Activated naive CD4-positive, alpha-beta T cell treated with anti-CD3 and anti-CD28 coated beads for 36 hours (primary cell): ENCODE measurements at regions of chr6 and their contacts with region 1.

Region 1: GRCh38 chr6:88855541-88856147 is 107.8 kb downstream of the RNGTT start:
- DNase-seq: no peak
- H3K4me3 Mint-ChIP-seq: no peak overlapping the region
- H3K27ac Mint-ChIP-seq: no peak overlapping the region
- H3K4me1 Mint-ChIP-seq: no peaks in the 10 kb centered on the region
- H3K27me3 Mint-ChIP-seq: no peaks in the 10 kb centered on the region

Region 2: DNA sequence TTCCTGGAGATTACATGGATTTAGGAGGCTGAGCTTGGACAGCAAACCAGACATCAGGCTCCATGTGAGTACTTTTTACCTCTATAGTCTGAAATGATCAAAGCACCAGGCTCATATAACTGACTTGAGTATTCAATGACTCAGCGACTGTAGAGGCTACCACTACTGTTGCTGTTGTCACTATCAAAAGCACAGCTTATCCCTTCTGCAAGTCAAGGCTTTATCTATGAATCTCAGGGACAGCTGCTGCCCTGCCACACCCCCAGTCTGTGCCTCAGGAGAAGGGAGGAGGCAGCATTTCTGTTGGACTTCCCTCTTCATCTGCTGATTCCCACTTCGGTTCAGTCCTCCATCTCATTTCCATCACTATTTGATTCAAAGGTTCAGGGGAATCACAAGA is 609.0 kb before region 1 on chr6:
- CTCF ChIA-PET with region 1: no interaction called
- intact Hi-C with region 1: loop called (anchors 5 kb)
- DNase-seq: no peak
- H3K4me3 Mint-ChIP-seq: no peak overlapping the region
- H3K27ac Mint-ChIP-seq: no peak overlapping the region
- H3K4me1 Mint-ChIP-seq: no peaks in the 10 kb centered on the region
- H3K27me3 Mint-ChIP-seq: peaks cover 10% of the 10 kb centered on the region

Region 3: GRCh38 chr6:88804701-88805100 is 50.9 kb before region 1 on chr6:
- CTCF ChIA-PET with region 1: no interaction called
- intact Hi-C with region 1: no loop called
- DNase-seq: no peak
- H3K4me3 Mint-ChIP-seq: no peak overlapping the region
- H3K27ac Mint-ChIP-seq: no peak overlapping the region
- H3K4me1 Mint-ChIP-seq: peaks cover 12% of the 10 kb centered on the region
- H3K27me3 Mint-ChIP-seq: no peaks in the 10 kb centered on the region

Region 4: DNA sequence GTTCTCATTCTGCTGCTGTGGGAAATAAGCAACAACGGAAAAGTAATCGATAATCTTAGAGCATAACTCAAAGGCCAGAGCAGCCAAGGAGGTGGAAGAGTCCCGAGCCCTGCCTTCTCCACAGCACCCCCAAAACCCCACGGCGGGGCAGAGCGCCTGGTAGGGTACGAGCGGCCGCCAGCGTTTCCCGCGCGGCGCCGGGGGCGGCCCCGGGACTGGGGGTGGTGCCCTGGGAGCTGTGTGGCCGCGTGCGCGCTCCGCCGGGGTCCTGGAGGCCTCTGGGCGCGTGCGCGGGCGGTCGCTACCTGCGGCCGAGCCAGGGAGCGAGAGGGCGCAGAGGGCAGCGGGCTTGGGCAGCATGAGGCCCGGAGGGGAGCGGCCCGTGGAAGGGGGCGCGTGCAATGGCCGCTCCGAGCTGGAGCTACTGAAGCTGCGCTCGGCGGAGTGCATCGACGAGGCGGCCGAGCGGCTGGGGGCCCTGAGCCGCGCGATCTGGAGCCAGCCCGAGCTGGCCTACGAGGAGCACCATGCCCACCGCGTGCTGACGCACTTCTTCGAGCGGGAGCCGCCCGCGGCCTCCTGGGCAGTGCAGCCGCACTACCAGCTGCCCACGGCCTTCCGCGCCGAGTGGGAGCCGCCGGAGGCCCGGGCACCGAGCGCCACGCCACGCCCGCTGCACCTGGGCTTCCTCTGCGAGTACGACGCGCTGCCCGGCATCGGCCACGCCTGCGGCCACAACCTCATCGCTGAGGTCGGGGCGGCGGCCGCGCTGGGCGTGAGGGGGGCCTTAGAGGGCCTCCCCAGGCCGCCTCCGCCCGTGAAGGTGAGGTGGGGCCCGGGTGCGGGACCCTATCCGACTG is 290.4 kb after region 1 on chr6 and contains the start of gene PM20D2:
- CTCF ChIA-PET with region 1: no interaction called
- intact Hi-C with region 1: no loop called
- DNase-seq: peak; percentile 59
- H3K4me3 Mint-ChIP-seq: peak within 1 kb of the TSS; percentile 90
- H3K27ac Mint-ChIP-seq: peak within 1 kb of the TSS; percentile 96
- H3K4me1 Mint-ChIP-seq: peaks cover 27% of the 10 kb centered on the region
- H3K27me3 Mint-ChIP-seq: no peaks in the 10 kb centered on the region
- total RNA-seq, gene PM20D2: 11.6 to 12.7 TPM